ENCODE measurements at regions of chr11 and their contacts with region 1.

Region 1: DNA sequence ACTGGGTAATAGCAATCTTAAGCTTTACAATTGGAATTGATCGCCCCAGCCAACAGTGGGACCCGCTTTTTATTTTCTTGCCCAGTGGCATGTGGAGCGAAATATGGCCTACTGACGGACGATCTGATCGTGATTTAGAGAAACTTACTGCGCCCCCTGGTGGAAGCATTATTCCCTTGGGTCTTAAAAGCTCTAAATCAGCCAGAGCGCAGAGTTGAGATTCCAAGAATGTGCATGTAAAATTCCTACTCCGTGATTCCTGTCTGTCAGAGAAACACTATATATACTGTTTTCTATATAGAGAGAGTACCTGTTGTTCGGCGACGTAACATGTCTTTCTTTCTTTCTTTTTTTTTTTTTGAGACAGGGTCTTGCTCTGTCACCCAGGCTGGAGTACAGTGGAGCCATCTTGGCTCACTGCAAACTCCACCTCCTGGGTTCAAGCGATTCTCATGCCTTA is 3.7 kb upstream of the DPF2 start:
- DNase-seq: peak; percentile 42 to 97 (median 82)
- H3K4me3 ChIP-seq: peak overlapping the region in 30 of 59 donors; percentile 0 to 46 (median 20)
- H3K27ac ChIP-seq: peak overlapping the region in 41 of 59 donors; percentile 2 to 76 (median 50)
- H3K27me3 ChIP-seq: no peaks in the 10 kb centered on the region
- CTCF ChIP-seq: peak; percentile 70 to 97 (median 87)

Region 2: DNA sequence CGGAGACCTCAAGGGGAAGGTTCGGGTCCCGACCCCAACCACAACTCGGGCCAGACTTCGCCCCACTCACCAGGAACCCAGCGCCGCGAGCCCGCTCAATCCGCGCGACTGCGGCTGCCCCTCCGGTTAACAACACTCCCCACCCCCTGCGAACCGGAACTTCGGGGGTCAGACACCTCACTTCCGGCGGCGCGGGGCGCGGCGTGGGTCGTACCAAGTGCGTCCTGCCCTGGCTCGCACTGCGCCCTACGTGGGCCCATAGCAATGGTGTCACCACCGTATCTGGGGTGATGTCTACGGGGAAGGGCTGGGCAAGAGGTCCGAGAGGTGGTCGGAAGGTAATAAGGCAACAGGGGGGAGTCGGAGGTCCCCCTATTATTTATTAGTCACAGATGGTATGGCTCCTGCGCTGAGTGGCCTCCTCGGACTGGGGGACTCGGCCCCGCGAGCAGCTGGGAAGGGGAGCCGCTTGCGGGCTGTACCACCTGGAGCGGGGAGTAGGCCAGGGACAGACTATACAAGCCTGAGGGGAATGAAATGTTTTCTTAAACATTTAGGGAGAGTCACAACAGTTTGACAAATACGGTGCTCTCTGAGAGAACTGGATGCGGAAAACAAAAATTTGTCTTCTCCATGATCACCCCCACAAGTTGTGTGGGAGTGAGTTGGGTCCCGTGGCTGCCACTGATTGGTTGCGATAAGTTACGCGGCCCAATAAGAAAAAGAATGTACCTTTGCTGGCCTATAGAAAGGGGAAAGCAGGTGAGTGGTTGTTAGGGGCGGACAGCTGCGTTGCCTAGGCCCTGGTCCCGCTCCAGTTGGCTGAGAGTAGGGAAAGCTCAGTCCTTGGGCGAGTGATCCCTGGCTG is 195.4 kb before region 1 on chr11 and contains the start of gene SYVN1:
- intact Hi-C with region 1: loop called in 1 of 2 experiments (anchors 10 kb)
- DNase-seq: peak; percentile 86 to 97 (median 91)
- H3K4me3 ChIP-seq: peak within 1 kb of the TSS; percentile 62 to 100 (median 94)
- H3K27ac ChIP-seq: peak within 1 kb of the TSS; percentile 86 to 100 (median 98)
- H3K27me3 ChIP-seq: no peaks in the 10 kb centered on the region
- CTCF ChIP-seq: peak in 13 of 56 donors; percentile 3 to 42 (median 22)
- total RNA-seq, gene SYVN1: 38.3 to 74.2 (median 53.2) TPM

Measured in dorsolateral prefrontal cortex (tissue), 120 donors.